ENCODE measurements at regions of chrX and their contacts with region 1.

Region 1: DNA sequence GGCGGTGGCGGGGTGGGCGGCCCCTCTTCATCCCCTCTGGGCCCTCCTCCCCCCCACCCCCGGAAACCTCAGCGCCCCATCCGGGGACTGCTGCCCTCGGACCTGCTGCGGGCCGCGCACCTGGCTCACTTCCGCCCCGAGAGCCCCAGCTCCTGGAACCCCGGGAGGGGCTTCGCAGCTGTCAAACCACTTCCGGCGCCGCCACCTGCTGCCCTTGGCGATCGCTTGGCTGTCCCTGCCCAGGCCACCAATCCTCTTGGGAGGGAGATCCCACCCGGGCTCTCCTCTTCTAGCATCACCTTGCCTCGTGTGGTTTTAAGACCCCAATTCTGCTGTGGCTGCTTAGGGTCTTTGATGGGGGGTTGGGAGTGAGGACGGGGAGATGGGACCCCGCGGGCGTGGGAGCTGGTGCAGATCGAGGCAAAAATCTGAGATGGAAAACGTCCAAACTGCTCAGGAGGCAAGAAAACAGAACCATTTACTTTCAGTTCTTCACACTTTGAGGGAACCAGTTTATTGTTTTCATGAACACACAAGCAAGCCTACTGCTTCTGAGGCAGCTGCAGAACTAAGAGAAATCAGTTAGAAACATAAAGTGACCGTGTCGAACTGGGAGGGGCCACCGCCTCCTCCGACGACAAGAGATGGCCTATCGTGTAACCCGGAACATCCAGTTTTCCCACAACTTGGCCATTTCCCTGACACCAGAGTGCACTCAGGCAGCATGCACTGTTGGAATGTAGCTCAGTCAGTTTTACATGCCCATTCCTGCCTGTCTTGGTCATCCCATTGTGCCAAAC is 779 bp downstream of the MTMR1 start:
- DNase-seq: peak; percentile 66
- H3K4me3 Mint-ChIP-seq: peak overlapping the region; percentile 91
- H3K27ac Mint-ChIP-seq: peak overlapping the region; percentile 97
- H3K4me1 Mint-ChIP-seq: peaks cover 65% of the 10 kb centered on the region
- H3K27me3 Mint-ChIP-seq: no peaks in the 10 kb centered on the region

Region 2: DNA sequence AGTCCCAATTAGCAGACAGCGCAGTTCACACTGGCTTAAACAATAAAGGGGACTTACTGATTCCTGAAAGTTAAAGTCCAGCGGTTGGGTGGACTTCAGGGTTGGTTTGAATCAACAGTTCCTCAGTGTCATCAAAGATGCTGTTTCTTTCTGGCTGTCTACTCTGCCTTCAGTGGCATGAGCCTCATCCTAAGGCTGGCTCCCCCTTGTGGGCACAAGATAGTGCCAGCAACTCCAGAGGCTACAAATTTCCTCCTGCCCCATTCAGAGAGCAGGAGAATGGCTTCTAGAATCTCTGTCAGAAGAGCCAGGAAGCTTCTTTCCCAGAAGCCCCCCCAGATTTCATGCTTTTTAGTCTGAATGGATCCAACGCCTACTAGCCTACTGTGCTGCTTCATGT is 208.0 kb before region 1 on chrX:
- intact Hi-C with region 1: loop called (anchors 2 kb)
- DNase-seq: peak; percentile 36
- H3K4me3 Mint-ChIP-seq: no peak overlapping the region
- H3K27ac Mint-ChIP-seq: no peak overlapping the region
- H3K4me1 Mint-ChIP-seq: peaks cover 55% of the 10 kb centered on the region
- H3K27me3 Mint-ChIP-seq: no peaks in the 10 kb centered on the region

Region 3: DNA sequence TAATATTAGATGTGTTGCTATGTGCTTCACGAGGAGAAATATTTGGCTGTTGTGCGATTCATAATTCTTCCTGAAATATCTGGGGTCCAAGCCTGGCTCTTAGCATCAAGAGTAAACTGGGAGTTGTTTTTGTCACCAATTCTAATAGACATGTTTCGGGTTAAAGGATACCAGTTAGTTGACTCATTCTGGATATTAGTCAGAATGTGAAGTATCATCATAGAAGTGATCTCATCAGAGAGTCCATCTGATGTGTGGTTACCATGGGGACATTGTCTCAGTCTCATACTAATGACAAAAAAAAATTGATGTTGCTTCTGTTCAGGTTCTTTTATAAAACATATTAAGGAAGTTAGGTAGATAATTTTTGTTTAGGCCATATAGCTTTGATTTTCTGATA is 58.0 kb before region 1 on chrX:
- intact Hi-C with region 1: loop called (anchors 5 kb)
- DNase-seq: no peak
- H3K4me3 Mint-ChIP-seq: no peak overlapping the region
- H3K27ac Mint-ChIP-seq: peak overlapping the region; percentile 78
- H3K4me1 Mint-ChIP-seq: peaks cover 7% of the 10 kb centered on the region
- H3K27me3 Mint-ChIP-seq: no peaks in the 10 kb centered on the region

Region 4: DNA sequence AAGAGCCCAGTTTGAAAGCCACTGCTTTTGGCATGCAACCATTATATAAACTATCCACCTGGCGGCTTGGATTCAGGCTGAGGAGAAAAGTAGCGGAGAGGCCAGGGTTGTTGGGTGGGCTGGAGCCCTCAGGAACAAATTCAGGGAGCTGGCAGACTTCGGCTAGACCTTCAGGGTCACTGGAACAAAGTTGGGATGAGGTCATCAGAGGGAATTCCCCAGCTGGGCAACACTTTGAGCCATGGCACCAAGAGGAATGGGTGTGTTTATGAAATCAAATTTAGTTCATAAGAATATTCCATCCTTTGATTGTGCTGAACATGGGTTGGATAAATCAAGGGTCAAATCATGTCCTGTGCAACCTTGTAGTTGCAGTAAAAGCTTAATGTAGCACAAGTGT is 21.2 kb after region 1 on chrX:
- intact Hi-C with region 1: loop called (anchors 2 kb)
- DNase-seq: no peak
- H3K4me3 Mint-ChIP-seq: no peak overlapping the region
- H3K27ac Mint-ChIP-seq: no peak overlapping the region
- H3K4me1 Mint-ChIP-seq: peaks cover 11% of the 10 kb centered on the region
- H3K27me3 Mint-ChIP-seq: no peaks in the 10 kb centered on the region

Measured in activated T-helper 1 cell treated with anti-CD3 and anti-CD28 coated beads, Interleukin-12 subunit alpha, Interleukin-12 subunit beta, Interleukin-2, Interleukin-4 antibody, amounts not matched to agents 30 ng/mL and 10 ng/mL and 1 ng/mL, durations not matched to agents 14 hours and 24 hours and 36 hours (primary cell).